ENCODE measurements at regions of chr17 and their contacts with region 1.

Region 1: GRCh38 chr17:81440876-81441244 is 45.6 kb downstream of the BAHCC1 start:
- DNase-seq: peak in 2 of 3 donors; percentile 57 to 62
- H3K4me3 ChIP-seq: no peak overlapping the region
- H3K27ac ChIP-seq: no peak overlapping the region
- H3K4me1 ChIP-seq: peaks cover 0 to 54% (median 49%) of the 10 kb centered on the region in 4 experiments
- H3K27me3 ChIP-seq: no peaks in the 10 kb centered on the region

Region 2: DNA sequence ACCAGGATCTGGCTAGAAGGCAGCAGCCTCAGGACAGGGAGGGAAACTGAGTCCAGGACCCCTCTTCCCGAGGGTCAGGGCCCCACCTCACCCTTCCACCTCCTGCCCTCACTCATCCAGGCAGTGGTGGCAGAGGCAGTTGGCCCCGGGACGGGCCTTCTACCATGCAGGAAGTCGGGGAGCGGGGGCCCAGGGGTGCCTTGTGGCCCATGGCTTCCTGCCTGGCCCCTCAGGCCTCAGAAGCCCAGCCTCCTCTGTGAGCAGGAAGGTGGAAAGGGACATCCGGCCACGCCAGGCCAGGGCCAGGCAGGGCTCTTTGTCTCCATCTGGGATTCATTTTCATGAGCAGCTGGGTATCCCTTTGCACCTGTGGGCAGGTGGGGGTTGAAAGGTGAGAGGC is 12.9 kb after region 1 on chr17:
- CTCF ChIA-PET with region 1: interaction called, 14 read pairs
- POLR2A ChIA-PET with region 1: interaction called, 4 read pairs
- DNase-seq: peak; percentile 52 to 83 (median 78)
- H3K4me3 ChIP-seq: peak overlapping the region in 4 of 7 experiments; percentile 39 to 57 (median 49)
- H3K27ac ChIP-seq: peak overlapping the region; percentile 54 to 83
- H3K4me1 ChIP-seq: peaks cover 0 to 74% (median 57%) of the 10 kb centered on the region in 4 experiments
- H3K27me3 ChIP-seq: no peaks in the 10 kb centered on the region

Region 3: GRCh38 chr17:81473019-81473418 is 32.2 kb after region 1 on chr17:
- CTCF ChIA-PET with region 1: interaction called, 11 read pairs
- POLR2A ChIA-PET with region 1: no interaction called
- DNase-seq: no peak
- H3K4me3 ChIP-seq: no peak overlapping the region
- H3K27ac ChIP-seq: no peak overlapping the region
- H3K4me1 ChIP-seq: peaks cover 0 to 19% (median 5%) of the 10 kb centered on the region in 4 experiments
- H3K27me3 ChIP-seq: no peaks in the 10 kb centered on the region